BJ (cell line): ENCODE measurements at regions of chr1 and their contacts with region 1.

Region 1: GRCh38 chr1:210262167-210262896 is 29.7 kb downstream of the SERTAD4 start:
- DNase-seq: peak; percentile 90
- H3K4me3 ChIP-seq: no peak overlapping the region
- H3K27me3 ChIP-seq: no peaks in the 10 kb centered on the region
- CTCF ChIP-seq: 0 out of 2 replicates have a peak, but pooled peaks have one; percentile 12

Region 2: DNA sequence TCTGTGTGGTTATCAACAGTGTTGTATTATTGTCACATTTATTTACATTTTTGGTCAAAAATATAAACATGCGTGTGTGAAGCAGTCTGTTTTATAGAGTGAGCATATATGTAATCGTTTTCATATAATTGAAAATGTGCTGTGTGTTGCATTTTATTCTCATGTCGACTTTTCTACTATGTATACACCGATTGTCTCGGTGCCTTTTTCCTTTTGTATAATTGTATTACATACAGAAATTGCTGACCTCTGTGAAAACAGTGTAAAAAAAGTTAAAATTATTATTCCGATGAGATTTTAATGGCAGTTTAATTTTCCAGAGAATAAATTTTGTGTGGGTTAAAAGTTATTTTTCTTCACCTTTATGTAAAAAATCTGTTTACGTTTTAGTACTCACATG is 92.1 kb before region 1 on chr1:
- CTCF ChIA-PET with region 1: no interaction called
- POLR2A ChIA-PET with region 1: no interaction called
- DNase-seq: no peak
- H3K4me3 ChIP-seq: no peak overlapping the region
- H3K27me3 ChIP-seq: no peaks in the 10 kb centered on the region
- CTCF ChIP-seq: no peak

Region 3: GRCh38 chr1:210250998-210251679 is 11.2 kb before region 1 on chr1:
- CTCF ChIA-PET with region 1: interaction called, 12 read pairs
- POLR2A ChIA-PET with region 1: interaction called, 3 read pairs
- DNase-seq: no peak
- H3K4me3 ChIP-seq: peak overlapping the region; percentile 37
- H3K27me3 ChIP-seq: peaks cover 3% of the 10 kb centered on the region; the same call in 1 of the 2 replicates
- CTCF ChIP-seq: peak; percentile 14; the same call in 1 of the 2 replicates

Region 4: GRCh38 chr1:210272666-210273065 is 10.3 kb after region 1 on chr1:
- CTCF ChIA-PET with region 1: no interaction called
- POLR2A ChIA-PET with region 1: no interaction called
- DNase-seq: no peak
- H3K4me3 ChIP-seq: no peak overlapping the region
- H3K27me3 ChIP-seq: no peaks in the 10 kb centered on the region; the same call in 1 of the 2 replicates
- CTCF ChIP-seq: no peak

Region 5: DNA sequence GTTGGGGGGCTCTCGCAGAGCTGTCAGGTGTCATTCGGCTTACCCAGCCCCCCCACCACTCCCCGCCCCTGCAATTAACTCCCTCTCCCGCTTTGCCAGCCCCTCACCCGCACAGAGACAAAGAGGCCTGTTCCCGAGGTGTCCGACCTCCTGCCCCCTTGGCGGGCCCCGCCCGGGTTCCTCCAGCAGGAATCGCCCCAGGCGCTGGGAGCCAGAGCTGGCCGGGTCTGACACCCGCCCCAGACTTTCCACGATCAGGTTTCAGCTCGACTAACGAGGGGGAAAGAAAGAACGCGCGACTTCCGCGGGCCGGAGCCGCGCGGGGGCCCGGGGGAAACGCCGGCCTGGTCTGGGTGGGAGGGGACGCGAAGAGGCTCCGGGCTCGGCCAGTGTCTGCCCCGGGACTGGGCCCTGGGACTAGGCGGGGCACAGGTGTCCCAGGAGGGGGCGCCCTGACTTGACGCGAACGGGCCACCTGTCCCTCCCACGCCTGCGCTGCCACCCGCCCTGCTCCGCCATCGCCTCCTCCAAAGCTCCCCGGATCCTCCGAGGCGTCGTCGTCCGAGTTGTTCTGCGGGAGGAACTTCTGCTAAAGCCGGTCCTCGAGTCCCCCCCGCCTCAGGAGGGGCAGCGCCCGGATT is 30.0 kb after region 1 on chr1:
- CTCF ChIA-PET with region 1: interaction called, 8 read pairs
- POLR2A ChIA-PET with region 1: interaction called, 14 read pairs
- DNase-seq: no peak
- H3K4me3 ChIP-seq: peak overlapping the region; percentile 35
- H3K27me3 ChIP-seq: no peaks in the 10 kb centered on the region; the same call in 1 of the 2 replicates
- CTCF ChIP-seq: peak; percentile 16; the same call in 1 of the 2 replicates

Region 6: GRCh38 chr1:210373885-210374599 is 111.7 kb after region 1 on chr1:
- CTCF ChIA-PET with region 1: no interaction called
- POLR2A ChIA-PET with region 1: no interaction called
- DNase-seq: peak; percentile 65
- H3K4me3 ChIP-seq: no peak overlapping the region
- H3K27me3 ChIP-seq: no peaks in the 10 kb centered on the region
- CTCF ChIP-seq: peak; percentile 80